ENCODE measurements at regions of chr10 and their contacts with region 1.

Region 1: GRCh38 chr10:70381471-70382421 is 679 bp downstream of the LRRC20 start:
- DNase-seq: peak; percentile 31
- H3K4me3 Mint-ChIP-seq: peak overlapping the region; percentile 86
- H3K27ac Mint-ChIP-seq: no peak overlapping the region
- H3K4me1 Mint-ChIP-seq: peaks cover 14% of the 10 kb centered on the region
- H3K27me3 Mint-ChIP-seq: peaks cover 14% of the 10 kb centered on the region

Region 2: DNA sequence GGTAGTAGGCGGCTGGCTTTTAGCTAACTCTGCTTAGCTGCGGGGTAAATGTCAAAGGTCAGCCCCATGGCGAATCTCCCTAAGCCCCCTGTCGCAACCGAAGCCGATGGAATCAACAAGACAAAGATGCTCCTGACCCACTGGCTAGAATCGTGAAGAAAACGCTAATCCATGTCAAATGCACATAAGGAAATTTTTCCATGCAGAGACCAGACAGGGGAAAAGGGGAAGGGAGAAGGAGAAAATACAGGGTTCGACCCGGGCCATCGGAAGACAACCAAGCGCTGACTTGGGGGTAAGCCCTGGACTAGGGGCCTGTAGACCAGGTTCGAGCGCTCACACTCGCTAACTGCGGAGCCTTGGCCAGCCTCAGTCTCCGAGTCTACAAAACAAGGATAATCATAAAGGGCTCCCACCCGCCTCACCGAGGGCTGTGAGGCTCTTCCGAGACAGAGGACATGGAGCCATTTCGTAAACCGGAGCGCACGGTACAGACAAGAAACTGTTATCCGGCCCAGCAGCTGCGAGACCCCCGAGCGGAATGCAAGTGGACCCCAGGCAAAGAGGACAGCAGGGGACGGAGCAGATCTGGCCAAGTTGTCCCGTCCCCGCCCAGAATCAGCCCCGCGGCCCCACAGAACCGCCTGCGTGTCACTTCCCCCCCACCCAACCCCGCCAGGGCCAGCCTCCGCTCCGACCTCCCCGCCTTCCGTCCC is 211.9 kb before region 1 on chr10:
- intact Hi-C with region 1: loop called (anchors 5 kb)
- DNase-seq: no peak
- H3K4me3 Mint-ChIP-seq: peak overlapping the region; percentile 96
- H3K27ac Mint-ChIP-seq: peak overlapping the region; percentile 83
- H3K4me1 Mint-ChIP-seq: peaks cover 65% of the 10 kb centered on the region
- H3K27me3 Mint-ChIP-seq: no peaks in the 10 kb centered on the region

Region 3: GRCh38 chr10:70221030-70221429 is 160.7 kb before region 1 on chr10:
- intact Hi-C with region 1: loop called (anchors 1 kb)
- DNase-seq: no peak
- H3K4me3 Mint-ChIP-seq: peak overlapping the region; percentile 28
- H3K27ac Mint-ChIP-seq: no peak overlapping the region
- H3K4me1 Mint-ChIP-seq: peaks cover 27% of the 10 kb centered on the region
- H3K27me3 Mint-ChIP-seq: no peaks in the 10 kb centered on the region

Region 4: DNA sequence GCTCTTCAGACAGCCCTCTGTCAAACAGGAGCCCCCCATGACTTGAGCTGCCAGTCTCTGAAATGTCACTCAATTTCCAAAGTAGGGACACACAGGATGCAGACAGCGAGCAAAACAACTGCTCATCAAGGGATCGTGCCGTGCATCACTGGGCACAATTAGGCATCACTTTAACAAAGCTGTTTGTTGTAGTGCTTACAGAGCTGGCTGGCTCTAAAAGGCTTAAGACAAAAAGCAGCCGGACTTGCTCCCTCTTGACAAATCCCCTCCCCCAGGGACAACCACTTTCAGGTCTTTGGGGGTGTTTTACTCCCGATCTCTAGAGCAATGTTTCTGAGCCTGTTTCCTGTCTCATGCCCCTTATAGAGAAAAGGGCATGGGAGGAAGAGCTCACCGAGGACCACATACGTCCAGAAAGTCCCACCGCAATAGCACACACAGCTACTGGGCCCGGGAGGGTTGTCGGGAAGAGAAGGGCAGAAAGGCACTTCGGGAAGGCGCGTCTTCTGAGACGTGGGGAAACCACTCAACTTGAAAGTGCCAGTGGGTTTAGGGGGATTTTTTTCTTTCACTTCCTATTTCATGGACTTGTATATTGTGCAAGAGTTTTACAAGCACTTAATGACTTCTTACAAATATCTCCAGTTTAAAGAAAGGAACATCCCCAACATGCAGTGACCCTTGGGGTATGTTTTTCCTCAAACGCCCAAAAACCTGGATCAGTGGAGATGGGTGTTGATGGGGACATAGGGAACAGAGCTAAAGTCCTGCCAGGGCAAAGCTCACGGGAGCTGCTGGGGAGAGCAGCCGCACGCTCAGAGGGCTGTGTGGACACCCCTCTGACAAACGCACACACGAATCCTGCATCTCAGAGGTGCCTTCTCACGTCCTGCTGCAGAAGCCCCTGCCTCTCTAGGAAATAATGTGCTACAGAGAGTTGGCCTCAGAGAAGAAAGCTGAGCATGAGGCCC is 26.4 kb before region 1 on chr10:
- intact Hi-C with region 1: loop called (anchors 2 kb)
- DNase-seq: peak; percentile 38
- H3K4me3 Mint-ChIP-seq: peak overlapping the region; percentile 74
- H3K27ac Mint-ChIP-seq: peak overlapping the region; percentile 76
- H3K4me1 Mint-ChIP-seq: peaks cover 62% of the 10 kb centered on the region
- H3K27me3 Mint-ChIP-seq: peaks cover 3% of the 10 kb centered on the region

Region 5: DNA sequence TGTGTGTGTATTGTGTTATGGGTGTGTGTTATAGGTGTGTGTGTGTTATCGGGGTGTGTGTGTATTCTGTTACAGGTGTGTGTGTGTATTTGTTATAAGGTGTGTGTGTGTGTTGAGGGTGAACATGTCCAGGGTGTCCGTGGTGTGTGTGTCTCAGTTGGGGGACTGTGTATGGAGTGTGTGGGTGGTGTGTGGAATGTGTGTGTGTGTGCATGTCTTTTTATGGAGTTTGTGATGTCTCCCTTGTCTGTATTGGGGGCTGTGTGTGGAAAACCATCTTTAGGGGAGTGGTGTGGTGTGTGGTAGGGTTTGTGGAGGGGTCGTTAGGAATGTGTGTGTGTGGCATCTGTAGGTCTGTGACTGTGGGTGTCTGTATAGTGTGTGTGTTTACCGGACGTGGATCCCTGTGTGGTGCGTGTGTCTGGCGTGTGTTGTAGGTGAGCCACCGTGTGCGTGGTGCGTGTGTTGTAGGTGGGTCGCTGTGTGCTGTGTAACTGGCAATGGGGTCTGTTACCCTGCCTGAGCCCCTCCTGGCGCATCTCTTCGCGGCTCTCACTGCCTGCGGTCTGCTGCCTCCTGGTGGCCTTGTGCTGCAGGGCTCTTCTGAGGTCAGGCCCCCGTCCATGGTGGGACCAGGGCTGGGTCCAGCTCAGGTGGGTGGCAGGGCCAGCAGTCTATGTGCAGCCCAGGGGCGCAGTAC is 158.5 kb after region 1 on chr10:
- intact Hi-C with region 1: loop called (anchors 5 kb)
- DNase-seq: no peak
- H3K4me3 Mint-ChIP-seq: no peak overlapping the region
- H3K27ac Mint-ChIP-seq: no peak overlapping the region
- H3K4me1 Mint-ChIP-seq: no peaks in the 10 kb centered on the region
- H3K27me3 Mint-ChIP-seq: peaks cover 7% of the 10 kb centered on the region

Measured in activated T-helper 1 cell treated with anti-CD3 and anti-CD28 coated beads, Interleukin-12 subunit alpha, Interleukin-12 subunit beta, Interleukin-2, Interleukin-4 antibody, amounts not matched to agents 30 ng/mL and 10 ng/mL and 1 ng/mL, durations not matched to agents 14 hours and 24 hours and 36 hours (primary cell).